Activated CD4-positive, alpha-beta T cell treated with anti-CD3 and anti-CD28 coated beads for 36 hours (primary cell): ENCODE measurements at regions of chrX and their contacts with region 1.

Region 1: GRCh38 chrX:153662266-153662665 is 11.3 kb downstream of the PNCK start:
- DNase-seq: peak; percentile 73
- ATAC-seq: no peak
- H3K4me3 Mint-ChIP-seq: no peak overlapping the region
- H3K27ac Mint-ChIP-seq: no peak overlapping the region
- H3K4me1 Mint-ChIP-seq: peaks cover 3% of the 10 kb centered on the region
- H3K27me3 Mint-ChIP-seq: peaks cover 11% of the 10 kb centered on the region

Region 2: GRCh38 chrX:153539171-153539978 is 122.9 kb before region 1 on chrX:
- CTCF ChIA-PET with region 1: interaction called, 33 read pairs
- POLR2A ChIA-PET with region 1: no interaction called
- intact Hi-C with region 1: loop called (anchors 2 to 5 kb)
- DNase-seq: peak; percentile 73
- ATAC-seq: peak; percentile 93
- H3K4me3 Mint-ChIP-seq: no peak overlapping the region
- H3K27ac Mint-ChIP-seq: no peak overlapping the region
- H3K4me1 Mint-ChIP-seq: no peaks in the 10 kb centered on the region
- H3K27me3 Mint-ChIP-seq: peaks cover 2% of the 10 kb centered on the region

Region 3: GRCh38 chrX:153554519-153555167 is 107.6 kb before region 1 on chrX:
- CTCF ChIA-PET with region 1: interaction called, 14 read pairs
- POLR2A ChIA-PET with region 1: no interaction called
- intact Hi-C with region 1: loop called (anchors 2 to 5 kb)
- DNase-seq: peak; percentile 76
- ATAC-seq: peak; percentile 66
- H3K4me3 Mint-ChIP-seq: no peak overlapping the region
- H3K27ac Mint-ChIP-seq: no peak overlapping the region
- H3K4me1 Mint-ChIP-seq: no peaks in the 10 kb centered on the region
- H3K27me3 Mint-ChIP-seq: no peaks in the 10 kb centered on the region

Region 4: GRCh38 chrX:153609917-153610428 is 52.3 kb before region 1 on chrX:
- CTCF ChIA-PET with region 1: interaction called, 19 read pairs
- POLR2A ChIA-PET with region 1: no interaction called
- intact Hi-C with region 1: loop called (anchors 1 to 5 kb)
- DNase-seq: peak; percentile 85
- ATAC-seq: peak; percentile 91
- H3K4me3 Mint-ChIP-seq: peak overlapping the region; percentile 62
- H3K27ac Mint-ChIP-seq: peak overlapping the region; percentile 73
- H3K4me1 Mint-ChIP-seq: peaks cover 13% of the 10 kb centered on the region
- H3K27me3 Mint-ChIP-seq: no peaks in the 10 kb centered on the region